Left cardiac atrium (tissue), 4 donors: ENCODE measurements at regions of chr5 and their contacts with region 1.

Region 1: GRCh38 chr5:64958757-64959391 is 190.1 kb downstream of the CWC27 start:
- DNase-seq: no peak
- ATAC-seq: no peak

Region 2: DNA sequence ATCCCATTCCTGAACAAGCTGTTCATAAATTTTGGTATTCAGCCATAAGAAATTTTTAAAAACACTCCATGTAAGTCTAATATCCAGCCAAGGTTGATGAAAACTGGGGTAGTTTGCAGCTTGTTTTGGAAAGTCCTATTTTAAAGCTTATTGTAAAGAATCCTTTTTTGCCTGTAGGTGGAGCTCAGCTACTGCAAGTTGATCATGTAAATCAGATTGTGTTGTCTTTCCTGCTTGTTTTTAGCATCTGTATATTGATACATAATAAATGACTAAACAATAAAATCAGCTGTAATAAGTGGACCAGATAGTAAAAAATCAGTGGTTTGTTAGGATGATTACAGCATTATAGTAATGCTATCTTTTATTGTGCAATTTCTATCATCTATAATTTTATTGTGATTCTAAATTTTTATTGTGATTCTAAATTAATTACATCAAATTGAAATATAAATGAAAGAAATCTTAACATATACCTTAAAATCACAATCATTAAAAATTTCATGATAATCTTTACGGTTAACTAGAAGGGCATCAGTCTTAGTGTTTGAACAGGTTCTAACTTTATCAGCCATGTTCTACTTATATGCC is 147.7 kb before region 1 on chr5:
- intact Hi-C with region 1: loop called in 1 of 2 experiments (anchors 10 kb)
- DNase-seq: no peak
- ATAC-seq: peak in 1 of 2 donors; percentile 65

Region 3: GRCh38 chr5:65062469-65063083 is 103.7 kb after region 1 on chr5:
- intact Hi-C with region 1: no loop called
- DNase-seq: peak; percentile 49
- ATAC-seq: peak; percentile 91 to 96